Posterior cingulate gyrus (tissue), 11 donors: ENCODE measurements at regions of chr10 and their contacts with region 1.

Region 1: DNA sequence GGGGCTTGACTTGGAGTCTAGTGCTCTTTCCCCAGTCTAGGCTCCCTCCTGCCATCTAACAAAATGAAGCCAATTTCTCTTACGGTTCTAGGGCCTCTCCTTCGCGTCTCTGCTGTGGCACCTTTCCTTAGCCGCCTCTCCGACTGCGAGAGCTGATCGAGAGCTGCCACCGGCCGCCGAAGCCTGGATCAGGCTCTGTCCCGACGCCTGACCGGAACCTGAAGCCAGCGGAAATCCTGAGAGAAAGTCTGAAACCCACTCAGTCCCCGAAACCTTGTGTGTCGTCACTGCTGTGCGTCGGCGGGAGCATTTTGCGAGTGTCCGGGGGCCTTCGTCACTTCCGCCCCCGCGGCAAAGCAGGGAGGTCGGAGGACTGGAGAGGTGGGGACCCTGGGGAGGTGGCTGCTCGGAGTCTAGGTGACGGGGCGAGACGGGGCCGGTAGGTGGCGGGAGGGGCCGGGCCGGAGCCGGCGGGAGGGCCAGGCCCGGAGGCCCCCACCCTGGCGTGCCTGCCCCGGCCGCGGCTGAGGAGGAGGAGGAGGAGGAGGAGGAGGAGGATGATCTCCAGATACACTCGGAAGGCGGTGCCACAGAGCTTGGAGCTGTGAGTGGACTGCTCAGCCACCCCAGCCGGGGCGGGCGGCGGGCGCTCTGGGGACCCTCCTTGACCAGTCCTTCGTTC is at the starts of genes ECD and FAM149B1:
- DNase-seq: peak; percentile 87 to 99 (median 94)

Region 2: DNA sequence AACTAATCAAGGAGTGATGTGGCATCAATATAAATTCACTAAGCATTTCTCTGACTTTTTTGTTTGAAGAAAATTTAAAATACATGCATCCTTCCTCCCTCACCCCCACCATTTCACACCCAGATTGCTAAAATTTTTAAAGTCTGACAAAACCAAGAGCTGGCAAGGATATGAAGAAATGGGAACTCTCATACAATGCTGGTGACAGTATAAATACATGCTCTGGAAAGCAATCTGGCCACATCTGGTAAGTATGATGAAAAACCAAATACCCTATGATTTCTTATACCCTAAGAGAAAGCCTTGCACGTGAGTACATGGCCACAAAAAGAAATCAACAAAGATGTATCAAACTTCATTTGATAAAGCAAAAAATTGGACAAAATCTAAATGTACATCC is 102.5 kb before region 1 on chr10:
- intact Hi-C with region 1: no loop called
- DNase-seq: no peak

Region 3: GRCh38 chr10:73246783-73247508 is 79.0 kb after region 1 on chr10 and contains the start of gene DNAJC9:
- intact Hi-C with region 1: loop called (anchors 5 kb)
- DNase-seq: peak; percentile 91 to 99 (median 96)